T-cell (primary cell): ENCODE measurements at regions of chr19 and their contacts with region 1.

Region 1: DNA sequence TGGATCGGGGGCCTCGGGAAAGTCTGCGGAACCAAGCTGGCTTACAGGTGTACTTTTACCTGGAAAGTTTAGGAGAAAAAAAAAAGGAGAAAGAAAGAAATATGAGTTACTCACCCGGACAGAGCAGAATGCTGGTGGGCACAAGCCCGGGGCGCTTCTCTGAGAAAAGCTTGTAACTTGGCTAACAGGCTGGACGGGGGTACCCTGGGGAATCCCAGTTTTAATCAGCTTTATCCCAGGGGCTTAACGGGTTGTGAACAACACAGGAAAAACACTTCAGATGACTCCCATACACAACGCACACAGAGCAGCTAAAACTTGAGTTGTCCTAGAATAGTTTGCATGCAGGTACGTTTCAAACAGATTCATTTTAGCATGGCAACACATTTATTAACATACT is 37.3 kb downstream of the KLF2 start:
- DNase-seq: no peak
- ATAC-seq: no peak
- H3K4me3 ChIP-seq: no peak overlapping the region
- H3K4me3 Mint-ChIP-seq: peak overlapping the region in 1 of 3 donors; percentile 70
- H3K27ac ChIP-seq: peak overlapping the region; percentile 96
- H3K27ac Mint-ChIP-seq: peak overlapping the region; percentile 81 to 89
- H3K4me1 ChIP-seq: peaks cover 46 to 97% of the 10 kb centered on the region in 2 experiments
- H3K4me1 Mint-ChIP-seq: peaks cover 87 to 98% (median 91%) of the 10 kb centered on the region in 3 donors
- H3K27me3 ChIP-seq: no peaks in the 10 kb centered on the region
- H3K27me3 Mint-ChIP-seq: no peaks in the 10 kb centered on the region

Region 2: GRCh38 chr19:16070366-16070990 is 291.4 kb before region 1 on chr19:
- CTCF ChIA-PET with region 1: interaction called in 1 of 2 experiments, 10 read pairs
- POLR2A ChIA-PET with region 1: no interaction called
- DNase-seq: peak; percentile 70 to 93 (median 85)
- ATAC-seq: peak; percentile 90 to 93 (median 92)
- H3K4me3 ChIP-seq: peak overlapping the region; percentile 35 to 40
- H3K4me3 Mint-ChIP-seq: peak overlapping the region in 2 of 3 donors; percentile 54 to 69
- H3K27ac ChIP-seq: peak overlapping the region; percentile 96
- H3K27ac Mint-ChIP-seq: no peak overlapping the region
- H3K4me1 ChIP-seq: peaks cover 32 to 63% of the 10 kb centered on the region in 2 experiments
- H3K4me1 Mint-ChIP-seq: peaks cover 41 to 46% (median 44%) of the 10 kb centered on the region in 3 donors
- H3K27me3 ChIP-seq: no peaks in the 10 kb centered on the region
- H3K27me3 Mint-ChIP-seq: no peaks in the 10 kb centered on the region